ENCODE measurements at regions of chr4 and their contacts with region 1.

Region 1: DNA sequence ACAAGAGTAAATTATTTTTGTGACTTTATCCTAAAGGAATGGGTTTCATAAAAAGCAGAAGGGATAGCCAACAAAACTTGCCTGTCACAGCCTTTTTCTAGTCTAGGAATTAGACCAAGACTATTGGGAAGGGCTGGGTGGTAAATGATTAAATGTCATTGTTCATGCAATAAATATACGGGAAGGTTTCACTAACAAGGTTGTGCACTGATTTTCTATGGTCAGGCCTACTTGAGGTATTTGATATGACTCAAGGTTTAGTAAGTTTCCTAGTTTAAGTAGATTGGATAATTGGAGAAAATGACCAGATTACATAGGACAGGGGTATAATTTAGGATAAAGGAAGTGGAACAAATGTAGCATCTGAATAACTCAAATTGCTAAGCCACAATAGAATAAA is 249.1 kb upstream of the BMP3 start:
- DNase-seq: no peak
- ATAC-seq: no peak
- H3K4me3 ChIP-seq: no peak overlapping the region
- H3K27ac ChIP-seq: no peak overlapping the region
- H3K4me1 ChIP-seq: no peaks in the 10 kb centered on the region
- H3K27me3 ChIP-seq: peaks cover 3% of the 10 kb centered on the region; the same call in 1 of the 2 replicates
- CTCF ChIP-seq: no peak
- POLR2A ChIP-seq: no peak
- RAD21 ChIP-seq: no peak

Region 2: DNA sequence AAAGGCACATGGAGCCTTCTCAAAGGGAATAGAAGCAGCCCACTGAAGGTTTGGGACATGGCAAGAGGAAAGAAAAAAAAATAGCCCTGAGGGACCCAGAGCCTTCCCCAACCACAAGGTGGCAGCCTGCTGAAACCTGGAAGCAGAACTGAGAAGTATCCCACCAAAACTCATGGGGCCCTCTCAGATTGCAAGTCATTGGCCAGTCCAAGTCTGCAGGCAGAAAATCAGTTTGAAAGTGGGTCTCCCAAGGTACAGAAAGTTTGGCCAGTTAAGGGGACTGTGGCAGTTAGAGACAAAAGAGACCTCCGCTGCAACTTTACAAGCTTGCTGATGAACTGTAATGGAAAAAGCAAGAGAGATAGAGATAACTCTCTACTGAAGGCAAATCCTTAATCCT is 864.2 kb before region 1 on chr4:
- CTCF ChIA-PET with region 1: no interaction called
- POLR2A ChIA-PET with region 1: no interaction called
- RAD21 ChIA-PET with region 1: no interaction called
- intact Hi-C with region 1: no loop called
- DNase-seq: peak; percentile 42
- ATAC-seq: peak; percentile 80
- H3K4me3 ChIP-seq: no peak overlapping the region
- H3K27ac ChIP-seq: no peak overlapping the region
- H3K4me1 ChIP-seq: no peaks in the 10 kb centered on the region
- H3K27me3 ChIP-seq: no peaks in the 10 kb centered on the region
- CTCF ChIP-seq: peak; percentile 52 to 79 (median 75); a peak in 5 of 6 replicates
- POLR2A ChIP-seq: no peak
- RAD21 ChIP-seq: peak; percentile 52

Region 3: GRCh38 chr4:80798082-80798481 is 16.6 kb after region 1 on chr4:
- CTCF ChIA-PET with region 1: no interaction called
- POLR2A ChIA-PET with region 1: no interaction called
- RAD21 ChIA-PET with region 1: no interaction called
- intact Hi-C with region 1: loop called (anchors 1 kb)
- DNase-seq: no peak
- ATAC-seq: no peak
- H3K4me3 ChIP-seq: no peak overlapping the region
- H3K27ac ChIP-seq: no peak overlapping the region
- H3K4me1 ChIP-seq: no peaks in the 10 kb centered on the region
- H3K27me3 ChIP-seq: no peaks in the 10 kb centered on the region
- CTCF ChIP-seq: no peak
- POLR2A ChIP-seq: no peak
- RAD21 ChIP-seq: no peak

Region 4: DNA sequence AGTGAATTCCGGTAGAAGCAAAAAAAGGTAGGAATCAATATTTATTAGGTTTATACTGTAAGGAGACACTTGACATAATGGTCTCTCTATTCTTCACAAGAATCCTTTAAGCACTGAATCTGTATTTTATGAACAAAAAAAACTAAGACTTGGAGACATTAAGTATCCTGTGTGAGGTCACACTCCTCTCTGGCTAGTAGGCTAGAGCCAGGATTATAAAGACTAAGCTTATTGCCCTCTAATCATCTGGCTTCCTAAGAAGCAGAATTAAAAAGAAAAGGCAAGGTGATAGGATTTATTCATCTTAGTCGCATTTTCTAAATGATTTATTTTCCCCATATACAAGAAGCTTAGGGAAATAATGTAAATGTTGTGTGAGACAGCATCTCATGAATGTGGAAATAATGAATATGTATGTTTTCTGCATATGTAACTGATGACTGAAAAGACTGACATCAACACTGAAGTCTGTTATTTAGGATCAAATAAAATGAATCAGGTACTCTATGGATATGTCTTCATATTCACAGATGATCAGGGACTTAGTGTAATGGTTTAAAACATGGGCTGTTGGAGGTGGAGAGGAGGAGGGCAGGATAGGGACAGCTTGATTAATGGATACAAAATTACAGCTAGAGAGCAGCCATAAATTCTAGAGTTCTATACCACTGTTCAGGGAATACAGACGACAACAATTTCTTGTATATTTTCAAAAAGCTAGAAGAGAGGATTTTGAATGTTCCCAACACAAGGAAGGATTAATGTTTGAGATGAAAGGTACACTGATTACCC is 464.0 kb after region 1 on chr4:
- CTCF ChIA-PET with region 1: no interaction called
- POLR2A ChIA-PET with region 1: no interaction called
- RAD21 ChIA-PET with region 1: no interaction called
- intact Hi-C with region 1: no loop called
- DNase-seq: no peak
- ATAC-seq: no peak
- H3K4me3 ChIP-seq: no peak overlapping the region
- H3K27ac ChIP-seq: no peak overlapping the region
- H3K4me1 ChIP-seq: no peaks in the 10 kb centered on the region
- H3K27me3 ChIP-seq: no peaks in the 10 kb centered on the region
- CTCF ChIP-seq: no peak
- POLR2A ChIP-seq: no peak
- RAD21 ChIP-seq: no peak